Breast epithelium (tissue), 4 donors: ENCODE measurements at regions of chr2 and their contacts with region 1.

Region 1: GRCh38 chr2:234792621-234793022 is 159.2 kb upstream of the SH3BP4 start:
- DNase-seq: no peak
- H3K4me3 ChIP-seq: no peak overlapping the region
- H3K27ac ChIP-seq: no peak overlapping the region
- H3K4me1 ChIP-seq: no peaks in the 10 kb centered on the region
- H3K27me3 ChIP-seq: no peaks in the 10 kb centered on the region
- CTCF ChIP-seq: no peak
- POLR2A ChIP-seq: no peak

Region 2: GRCh38 chr2:234763002-234763873 is 29.4 kb before region 1 on chr2:
- intact Hi-C with region 1: no loop called
- DNase-seq: no peak
- H3K4me3 ChIP-seq: no peak overlapping the region
- H3K27ac ChIP-seq: no peak overlapping the region
- H3K4me1 ChIP-seq: no peaks in the 10 kb centered on the region
- H3K27me3 ChIP-seq: no peaks in the 10 kb centered on the region
- CTCF ChIP-seq: no peak
- POLR2A ChIP-seq: no peak

Region 3: GRCh38 chr2:234840336-234840735 is 47.7 kb after region 1 on chr2:
- intact Hi-C with region 1: loop called (anchors 2 kb)
- DNase-seq: no peak
- H3K4me3 ChIP-seq: no peak overlapping the region
- H3K27ac ChIP-seq: no peak overlapping the region
- H3K4me1 ChIP-seq: no peaks in the 10 kb centered on the region
- H3K27me3 ChIP-seq: no peaks in the 10 kb centered on the region
- CTCF ChIP-seq: no peak
- POLR2A ChIP-seq: no peak